Activated naive CD4-positive, alpha-beta T cell treated with anti-CD3 and anti-CD28 coated beads for 36 hours (primary cell): ENCODE measurements at regions of chr7 and their contacts with region 1.

Region 1: DNA sequence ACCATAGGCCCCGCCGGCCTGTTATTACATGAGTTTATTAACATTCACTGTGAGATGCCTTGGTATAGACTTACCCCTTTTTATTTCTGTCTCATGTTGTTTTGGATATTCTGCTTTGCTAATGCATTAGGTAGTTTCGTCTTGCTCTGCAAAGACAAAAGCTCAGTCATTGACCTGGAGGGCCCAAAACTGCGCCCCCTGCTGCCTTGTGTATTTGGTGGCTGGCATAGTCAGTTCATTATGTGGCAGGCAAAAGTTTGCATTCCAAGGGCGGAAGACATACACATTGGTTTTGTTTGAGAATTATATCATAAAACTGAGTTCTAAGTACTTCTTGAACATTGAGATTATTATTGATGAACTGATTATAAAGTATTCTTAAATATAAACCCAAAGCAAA is 372.5 kb downstream of the SDK1 start:
- DNase-seq: peak; percentile 78
- H3K4me3 Mint-ChIP-seq: no peak overlapping the region
- H3K27ac Mint-ChIP-seq: no peak overlapping the region
- H3K4me1 Mint-ChIP-seq: no peaks in the 10 kb centered on the region
- H3K27me3 Mint-ChIP-seq: no peaks in the 10 kb centered on the region

Region 2: GRCh38 chr7:3399858-3400257 is 273.7 kb before region 1 on chr7:
- CTCF ChIA-PET with region 1: no interaction called
- intact Hi-C with region 1: loop called (anchors 10 kb)
- DNase-seq: peak; percentile 47
- H3K4me3 Mint-ChIP-seq: no peak overlapping the region
- H3K27ac Mint-ChIP-seq: no peak overlapping the region
- H3K4me1 Mint-ChIP-seq: no peaks in the 10 kb centered on the region
- H3K27me3 Mint-ChIP-seq: no peaks in the 10 kb centered on the region

Region 3: DNA sequence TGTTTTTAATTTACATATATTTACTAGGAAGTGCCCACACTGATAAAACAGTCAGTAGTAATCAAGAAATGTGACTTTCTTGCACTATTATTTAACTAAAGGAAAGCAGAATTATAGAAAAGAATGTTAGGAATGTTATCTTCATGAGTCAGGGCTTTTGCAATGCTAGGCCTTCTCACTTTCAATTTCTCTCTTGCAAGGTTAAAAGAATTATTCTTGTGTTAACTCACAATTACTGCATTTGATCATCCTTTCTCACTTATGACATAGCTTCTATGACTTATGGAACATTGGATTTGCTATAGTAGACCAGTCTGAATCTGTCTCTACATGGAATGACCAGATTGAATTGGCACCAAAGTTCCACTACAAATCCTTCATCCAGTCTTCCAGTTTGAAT is 180.0 kb before region 1 on chr7:
- CTCF ChIA-PET with region 1: no interaction called
- intact Hi-C with region 1: loop called (anchors 5 kb)
- DNase-seq: no peak
- H3K4me3 Mint-ChIP-seq: no peak overlapping the region
- H3K27ac Mint-ChIP-seq: no peak overlapping the region
- H3K4me1 Mint-ChIP-seq: peaks cover 29% of the 10 kb centered on the region
- H3K27me3 Mint-ChIP-seq: no peaks in the 10 kb centered on the region

Region 4: GRCh38 chr7:3861941-3862340 is 188.4 kb after region 1 on chr7:
- CTCF ChIA-PET with region 1: no interaction called
- intact Hi-C with region 1: no loop called
- DNase-seq: peak; percentile 55
- H3K4me3 Mint-ChIP-seq: no peak overlapping the region
- H3K27ac Mint-ChIP-seq: no peak overlapping the region
- H3K4me1 Mint-ChIP-seq: peaks cover 13% of the 10 kb centered on the region
- H3K27me3 Mint-ChIP-seq: no peaks in the 10 kb centered on the region